ENCODE measurements at regions of chr2 and their contacts with region 1.

Region 1: DNA sequence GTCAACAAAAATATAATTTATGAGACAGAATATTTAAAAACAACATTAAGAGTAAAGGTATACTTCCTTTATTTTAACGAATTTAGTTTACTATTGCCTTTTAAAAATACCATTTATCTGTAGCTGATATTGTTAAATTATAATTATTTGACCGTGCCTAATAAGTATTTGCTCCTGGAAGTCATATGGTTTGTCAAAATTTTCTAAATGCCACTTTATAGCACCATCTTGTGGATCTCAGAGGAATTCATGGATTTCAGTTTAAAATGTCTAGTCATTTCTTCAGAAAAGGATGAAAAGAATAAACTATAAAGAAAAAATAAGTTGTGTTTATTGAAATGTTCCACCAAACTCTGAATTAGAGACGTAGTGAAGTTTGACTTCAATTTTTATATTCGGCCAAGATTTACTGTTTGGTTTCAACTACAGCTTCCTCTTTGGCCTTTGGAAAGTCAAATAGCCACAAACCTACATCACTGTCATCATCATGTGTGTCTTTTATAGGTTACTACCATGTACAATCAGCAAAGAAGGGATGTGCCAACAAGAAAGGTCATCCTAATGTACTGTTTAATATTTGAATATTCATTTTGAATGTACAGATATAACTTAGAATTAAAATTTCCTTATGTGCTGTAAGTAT is 10.3 kb upstream of the FTCDNL1 start:
- DNase-seq: peak; percentile 38
- ATAC-seq: peak; percentile 63
- H3K4me3 ChIP-seq: no peak overlapping the region
- H3K27ac ChIP-seq: no peak overlapping the region
- H3K4me1 ChIP-seq: no peaks in the 10 kb centered on the region
- H3K27me3 ChIP-seq: peaks cover 12% of the 10 kb centered on the region
- CTCF ChIP-seq: peak; percentile 64
- POLR2A ChIP-seq: no peak
- RAD21 ChIP-seq: peak; percentile 57

Region 2: GRCh38 chr2:198309673-198310280 is 1551.5 kb before region 1 on chr2:
- CTCF ChIA-PET with region 1: no interaction called
- POLR2A ChIA-PET with region 1: no interaction called
- dilution Hi-C with region 1: no loop called
- in situ Hi-C with region 1: no loop called
- intact Hi-C with region 1: loop called (anchors 5 kb)
- DNase-seq: peak; percentile 38
- ATAC-seq: peak; percentile 56
- H3K4me3 ChIP-seq: no peak overlapping the region
- H3K27ac ChIP-seq: no peak overlapping the region
- H3K4me1 ChIP-seq: no peaks in the 10 kb centered on the region
- H3K27me3 ChIP-seq: no peaks in the 10 kb centered on the region; the same call in 1 of the 2 replicates
- CTCF ChIP-seq: peak; percentile 81
- POLR2A ChIP-seq: no peak
- RAD21 ChIP-seq: peak; percentile 54

Region 3: GRCh38 chr2:199704358-199705238 is 156.7 kb before region 1 on chr2:
- CTCF ChIA-PET with region 1: interaction called, 9 read pairs
- POLR2A ChIA-PET with region 1: no interaction called
- dilution Hi-C with region 1: no loop called
- in situ Hi-C with region 1: loop called (anchors 10 kb)
- intact Hi-C with region 1: loop called (anchors 1 kb)
- DNase-seq: peak; percentile 24
- ATAC-seq: peak; percentile 98
- H3K4me3 ChIP-seq: no peak overlapping the region
- H3K27ac ChIP-seq: no peak overlapping the region
- H3K4me1 ChIP-seq: no peaks in the 10 kb centered on the region
- H3K27me3 ChIP-seq: no peaks in the 10 kb centered on the region
- CTCF ChIP-seq: peak; percentile 53
- POLR2A ChIP-seq: no peak
- RAD21 ChIP-seq: peak; percentile 56

Region 4: GRCh38 chr2:199940373-199940772 is 79.1 kb after region 1 on chr2:
- CTCF ChIA-PET with region 1: no interaction called
- POLR2A ChIA-PET with region 1: no interaction called
- dilution Hi-C with region 1: no loop called
- in situ Hi-C with region 1: no loop called
- intact Hi-C with region 1: loop called (anchors 5 kb)
- DNase-seq: peak; percentile 38
- ATAC-seq: peak; percentile 62
- H3K4me3 ChIP-seq: no peak overlapping the region
- H3K27ac ChIP-seq: no peak overlapping the region
- H3K4me1 ChIP-seq: no peaks in the 10 kb centered on the region; the same call in 1 of the 2 replicates
- H3K27me3 ChIP-seq: no peaks in the 10 kb centered on the region
- CTCF ChIP-seq: peak; percentile 41
- POLR2A ChIP-seq: no peak
- RAD21 ChIP-seq: peak; percentile 36